HEK293 (cell line): ENCODE measurements at regions of chr1 and their contacts with region 1.

Region 1: GRCh38 chr1:181021811-181022434 is 747 bp downstream of the STX6 start:
- H3K4me3 ChIP-seq: peak overlapping the region; percentile 96
- H3K27ac ChIP-seq: peak overlapping the region; percentile 70
- H3K4me1 ChIP-seq: peaks cover 6% of the 10 kb centered on the region; the same call in 1 of the 2 replicates
- CTCF ChIP-seq: no peak

Region 2: GRCh38 chr1:180988253-180988752 is 33.6 kb before region 1 on chr1:
- CTCF ChIA-PET with region 1: no interaction called
- POLR2A ChIA-PET with region 1: no interaction called
- H3K4me3 ChIP-seq: no peak overlapping the region
- H3K27ac ChIP-seq: no peak overlapping the region
- H3K4me1 ChIP-seq: no peaks in the 10 kb centered on the region
- CTCF ChIP-seq: no peak

Region 3: GRCh38 chr1:181033799-181034451 is 12.0 kb after region 1 on chr1 and contains the start of gene MR1:
- CTCF ChIA-PET with region 1: interaction called, 13 read pairs
- POLR2A ChIA-PET with region 1: interaction called, 40 read pairs
- H3K4me3 ChIP-seq: peak within 1 kb of the TSS; percentile 54
- H3K27ac ChIP-seq: peak within 1 kb of the TSS; percentile 43
- H3K4me1 ChIP-seq: no peaks in the 10 kb centered on the region
- CTCF ChIP-seq: no peak